ENCODE measurements at regions of chr2 and their contacts with region 1.

Region 1: GRCh38 chr2:165563468-165564225 is 94.1 kb downstream of the CSRNP3 start:
- DNase-seq: peak in 1 of 2 experiments; percentile 28
- H3K4me3 ChIP-seq: no peak overlapping the region
- H3K4me3 Mint-ChIP-seq: no peak overlapping the region
- H3K27ac Mint-ChIP-seq: no peak overlapping the region
- H3K4me1 ChIP-seq: no peaks in the 10 kb centered on the region
- H3K4me1 Mint-ChIP-seq: peaks cover 6% of the 10 kb centered on the region
- H3K27me3 ChIP-seq: no peaks in the 10 kb centered on the region
- H3K27me3 Mint-ChIP-seq: peaks cover 5% of the 10 kb centered on the region
- CTCF ChIP-seq: peak in 1 of 2 experiments; percentile 71

Region 2: DNA sequence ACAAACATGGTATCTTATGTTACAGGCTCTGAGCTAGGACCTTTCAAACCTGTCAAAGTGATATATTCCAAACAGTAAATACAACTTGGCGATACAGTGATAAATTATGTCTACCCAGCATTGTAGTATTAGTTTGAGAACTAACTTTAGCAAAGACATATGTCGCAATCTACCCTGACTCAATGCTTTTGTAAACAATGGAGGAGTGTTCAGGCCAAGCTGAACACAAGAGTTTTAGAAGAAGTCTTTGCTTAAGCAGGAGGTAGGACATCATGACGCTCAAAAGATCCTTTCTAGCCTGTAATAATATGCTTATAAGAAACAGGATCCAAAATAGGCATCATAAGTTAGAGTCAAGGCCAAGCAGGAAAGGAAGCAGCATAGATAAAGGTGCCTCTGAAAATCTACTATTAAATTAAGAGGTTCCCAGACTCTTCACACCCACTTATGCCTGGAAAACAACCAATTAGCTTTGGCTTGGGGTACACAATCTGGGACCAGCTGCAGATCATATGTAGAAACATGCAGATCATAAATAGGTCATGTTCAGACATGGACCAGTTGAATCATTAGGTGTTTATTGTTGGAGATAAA is 38.4 kb after region 1 on chr2:
- CTCF ChIA-PET with region 1: no interaction called
- POLR2A ChIA-PET with region 1: no interaction called
- intact Hi-C with region 1: no loop called
- DNase-seq: no peak
- H3K4me3 ChIP-seq: no peak overlapping the region
- H3K4me3 Mint-ChIP-seq: no peak overlapping the region
- H3K27ac Mint-ChIP-seq: no peak overlapping the region
- H3K4me1 ChIP-seq: 0 out of 2 replicates have a peak, but pooled peaks cover 6% of the 10 kb centered on the region
- H3K4me1 Mint-ChIP-seq: no peaks in the 10 kb centered on the region
- H3K27me3 ChIP-seq: no peaks in the 10 kb centered on the region
- H3K27me3 Mint-ChIP-seq: no peaks in the 10 kb centered on the region
- CTCF ChIP-seq: no peak

Region 3: DNA sequence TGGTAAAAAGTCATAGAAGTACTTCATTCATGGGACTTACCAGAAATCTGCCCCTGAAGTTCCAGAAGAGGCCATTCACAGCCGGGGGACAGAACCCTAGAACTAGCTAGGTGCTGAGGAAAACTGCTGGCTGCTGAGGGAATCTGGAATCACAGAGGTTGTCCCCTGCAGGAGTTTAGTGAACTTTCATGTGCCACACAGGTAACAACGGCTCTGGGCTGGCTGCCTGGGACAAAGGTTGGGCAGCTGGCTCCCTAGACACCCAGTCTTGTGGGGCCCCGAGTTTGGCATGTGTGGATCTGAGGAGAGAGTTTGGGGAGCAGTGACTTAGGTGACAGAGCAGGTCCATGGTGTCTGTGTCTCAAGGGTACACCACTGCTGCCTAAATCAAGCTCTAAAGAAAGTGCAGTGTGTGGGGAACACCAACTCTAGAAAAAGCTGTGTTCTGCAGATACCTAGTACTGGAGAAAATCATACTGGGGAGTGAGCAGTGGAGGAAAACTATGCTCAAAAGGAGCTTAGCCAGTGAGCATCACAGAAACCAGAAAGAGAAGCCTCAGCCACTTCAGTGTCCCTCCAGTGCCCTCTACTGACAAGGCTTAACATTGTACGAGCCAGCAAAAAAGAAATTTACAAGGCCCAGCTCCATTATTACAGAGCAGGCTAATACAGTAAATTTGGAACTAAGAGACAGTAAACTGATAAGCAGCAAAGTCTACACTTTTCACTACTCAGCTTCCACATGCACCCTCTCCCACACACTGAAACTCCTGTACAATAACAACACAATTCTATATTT is 215.2 kb after region 1 on chr2:
- CTCF ChIA-PET with region 1: no interaction called
- POLR2A ChIA-PET with region 1: no interaction called
- intact Hi-C with region 1: loop called (anchors 2 kb)
- DNase-seq: peak in 1 of 2 experiments; percentile 57
- H3K4me3 ChIP-seq: no peak overlapping the region
- H3K4me3 Mint-ChIP-seq: no peak overlapping the region
- H3K27ac Mint-ChIP-seq: no peak overlapping the region
- H3K4me1 ChIP-seq: peaks cover 6% of the 10 kb centered on the region; the same call in 1 of the 2 replicates
- H3K4me1 Mint-ChIP-seq: peaks cover 7% of the 10 kb centered on the region
- H3K27me3 ChIP-seq: no peaks in the 10 kb centered on the region
- H3K27me3 Mint-ChIP-seq: no peaks in the 10 kb centered on the region
- CTCF ChIP-seq: peak; percentile 59 to 65

Region 4: GRCh38 chr2:165902929-165903328 is 339.3 kb after region 1 on chr2:
- CTCF ChIA-PET with region 1: no interaction called
- POLR2A ChIA-PET with region 1: no interaction called
- intact Hi-C with region 1: no loop called
- DNase-seq: peak in 1 of 2 experiments; percentile 6
- H3K4me3 ChIP-seq: no peak overlapping the region
- H3K4me3 Mint-ChIP-seq: no peak overlapping the region
- H3K27ac Mint-ChIP-seq: no peak overlapping the region
- H3K4me1 ChIP-seq: no peaks in the 10 kb centered on the region
- H3K4me1 Mint-ChIP-seq: peaks cover 9% of the 10 kb centered on the region
- H3K27me3 ChIP-seq: no peaks in the 10 kb centered on the region
- H3K27me3 Mint-ChIP-seq: no peaks in the 10 kb centered on the region
- CTCF ChIP-seq: no peak

Measured in Caco-2 (cell line).